ENCODE measurements at regions of chr10 and their contacts with region 1.

Region 1: GRCh38 chr10:7525314-7526016 is 114.6 kb upstream of the SFMBT2 start:
- DNase-seq: peak; percentile 79
- H3K4me3 Mint-ChIP-seq: no peak overlapping the region
- H3K27ac Mint-ChIP-seq: no peak overlapping the region
- H3K4me1 Mint-ChIP-seq: peaks cover 29% of the 10 kb centered on the region
- H3K27me3 Mint-ChIP-seq: peaks cover 22% of the 10 kb centered on the region

Region 2: DNA sequence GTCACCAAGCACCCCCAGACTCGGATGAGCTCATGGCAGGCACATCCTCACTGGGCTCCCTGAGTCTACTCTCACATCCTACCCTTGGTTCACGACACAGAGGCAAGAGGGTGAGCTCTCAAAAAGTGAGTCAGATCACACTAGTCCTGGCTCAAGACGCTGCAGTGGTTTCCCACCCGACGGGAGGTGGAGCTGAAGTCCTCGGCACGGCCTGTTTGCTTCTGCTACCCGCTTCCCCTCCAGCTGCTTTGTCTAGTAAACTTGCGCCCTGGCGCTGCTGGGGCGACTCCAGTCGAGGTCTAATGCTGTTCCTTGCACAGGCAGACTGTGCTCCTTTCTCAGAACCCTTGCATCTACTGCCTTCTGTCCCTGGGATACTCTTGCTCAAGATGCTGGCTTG is 101.2 kb before region 1 on chr10:
- CTCF ChIA-PET with region 1: interaction called, 12 read pairs
- DNase-seq: peak; percentile 43
- H3K4me3 Mint-ChIP-seq: no peak overlapping the region
- H3K27ac Mint-ChIP-seq: no peak overlapping the region
- H3K4me1 Mint-ChIP-seq: peaks cover 16% of the 10 kb centered on the region
- H3K27me3 Mint-ChIP-seq: peaks cover 19% of the 10 kb centered on the region

Region 3: GRCh38 chr10:7457478-7458316 is 67.8 kb before region 1 on chr10:
- CTCF ChIA-PET with region 1: no interaction called
- DNase-seq: no peak
- H3K4me3 Mint-ChIP-seq: no peak overlapping the region
- H3K27ac Mint-ChIP-seq: no peak overlapping the region
- H3K4me1 Mint-ChIP-seq: no peaks in the 10 kb centered on the region
- H3K27me3 Mint-ChIP-seq: peaks cover 5% of the 10 kb centered on the region

Region 4: DNA sequence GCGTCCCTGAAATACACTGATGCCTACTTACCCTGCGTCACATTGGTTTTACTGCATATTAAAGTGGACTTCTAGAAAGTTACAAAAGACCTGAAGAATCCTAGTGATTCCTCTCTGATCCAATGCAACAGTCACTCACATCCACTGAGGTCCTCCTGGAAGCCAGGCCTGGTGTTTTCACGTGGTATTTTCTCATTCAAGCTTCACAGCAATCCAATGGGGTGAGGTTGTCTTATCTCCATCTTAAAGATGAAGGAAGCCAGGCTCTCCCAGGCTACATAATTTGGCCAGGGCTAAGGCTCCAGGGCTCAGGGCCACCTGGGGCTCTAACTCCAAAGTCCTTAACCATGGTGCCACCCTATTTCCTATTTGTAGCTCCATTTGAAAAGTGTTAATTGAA is 11.7 kb after region 1 on chr10:
- CTCF ChIA-PET with region 1: interaction called, 12 read pairs
- DNase-seq: no peak
- H3K4me3 Mint-ChIP-seq: no peak overlapping the region
- H3K27ac Mint-ChIP-seq: no peak overlapping the region
- H3K4me1 Mint-ChIP-seq: peaks cover 9% of the 10 kb centered on the region
- H3K27me3 Mint-ChIP-seq: peaks cover 4% of the 10 kb centered on the region